Activated T-helper 2 cell treated with anti-CD3 and anti-CD28 coated beads, Interferon-gamma antibody, Interleukin-2, Interleukin-4, amounts not matched to agents 10 μg/mL and 5 μg/mL and 100 μg/mL, durations not matched to agents 14 hours and 24 hours and 36 hours (primary cell): ENCODE measurements at regions of chr17 and their contacts with region 1.

Region 1: GRCh38 chr17:31524926-31525800 is 133.7 kb downstream of the RAB11FIP4 start:
- DNase-seq: peak; percentile 66
- H3K4me3 Mint-ChIP-seq: no peak overlapping the region
- H3K27ac Mint-ChIP-seq: no peak overlapping the region
- H3K4me1 Mint-ChIP-seq: peaks cover 1% of the 10 kb centered on the region
- H3K27me3 Mint-ChIP-seq: no peaks in the 10 kb centered on the region

Region 2: GRCh38 chr17:31388770-31389661 is 136.1 kb before region 1 on chr17:
- intact Hi-C with region 1: loop called (anchors 5 kb)
- DNase-seq: no peak
- H3K4me3 Mint-ChIP-seq: no peak overlapping the region
- H3K27ac Mint-ChIP-seq: no peak overlapping the region
- H3K4me1 Mint-ChIP-seq: no peaks in the 10 kb centered on the region
- H3K27me3 Mint-ChIP-seq: peaks cover 48% of the 10 kb centered on the region

Region 3: GRCh38 chr17:31437720-31438420 is 87.3 kb before region 1 on chr17:
- intact Hi-C with region 1: loop called (anchors 1 kb)
- DNase-seq: no peak
- H3K4me3 Mint-ChIP-seq: no peak overlapping the region
- H3K27ac Mint-ChIP-seq: no peak overlapping the region
- H3K4me1 Mint-ChIP-seq: peaks cover 16% of the 10 kb centered on the region
- H3K27me3 Mint-ChIP-seq: peaks cover 27% of the 10 kb centered on the region

Region 4: GRCh38 chr17:31487648-31488263 is 37.4 kb before region 1 on chr17:
- intact Hi-C with region 1: loop called (anchors 5 kb)
- DNase-seq: peak; percentile 81
- H3K4me3 Mint-ChIP-seq: peak overlapping the region; percentile 75
- H3K27ac Mint-ChIP-seq: peak overlapping the region; percentile 35
- H3K4me1 Mint-ChIP-seq: peaks cover 43% of the 10 kb centered on the region
- H3K27me3 Mint-ChIP-seq: no peaks in the 10 kb centered on the region

Region 5: GRCh38 chr17:31558748-31559644 is 33.8 kb after region 1 on chr17:
- intact Hi-C with region 1: no loop called
- DNase-seq: peak; percentile 41
- H3K4me3 Mint-ChIP-seq: peak overlapping the region; percentile 70
- H3K27ac Mint-ChIP-seq: no peak overlapping the region
- H3K4me1 Mint-ChIP-seq: peaks cover 13% of the 10 kb centered on the region
- H3K27me3 Mint-ChIP-seq: peaks cover 19% of the 10 kb centered on the region